ENCODE measurements at regions of chr5 and their contacts with region 1.

Region 1: GRCh38 chr5:15510831-15511230 is 10.9 kb downstream of the FBXL7 start:
- DNase-seq: peak; percentile 16
- ATAC-seq: peak; percentile 40; the same call in 1 of the 2 replicates
- H3K4me3 ChIP-seq: no peak overlapping the region
- H3K27ac ChIP-seq: no peak overlapping the region
- H3K4me1 ChIP-seq: peaks cover 10% of the 10 kb centered on the region
- H3K27me3 ChIP-seq: no peaks in the 10 kb centered on the region
- CTCF ChIP-seq: no peak
- POLR2A ChIP-seq: no peak
- RAD21 ChIP-seq: no peak

Region 2: DNA sequence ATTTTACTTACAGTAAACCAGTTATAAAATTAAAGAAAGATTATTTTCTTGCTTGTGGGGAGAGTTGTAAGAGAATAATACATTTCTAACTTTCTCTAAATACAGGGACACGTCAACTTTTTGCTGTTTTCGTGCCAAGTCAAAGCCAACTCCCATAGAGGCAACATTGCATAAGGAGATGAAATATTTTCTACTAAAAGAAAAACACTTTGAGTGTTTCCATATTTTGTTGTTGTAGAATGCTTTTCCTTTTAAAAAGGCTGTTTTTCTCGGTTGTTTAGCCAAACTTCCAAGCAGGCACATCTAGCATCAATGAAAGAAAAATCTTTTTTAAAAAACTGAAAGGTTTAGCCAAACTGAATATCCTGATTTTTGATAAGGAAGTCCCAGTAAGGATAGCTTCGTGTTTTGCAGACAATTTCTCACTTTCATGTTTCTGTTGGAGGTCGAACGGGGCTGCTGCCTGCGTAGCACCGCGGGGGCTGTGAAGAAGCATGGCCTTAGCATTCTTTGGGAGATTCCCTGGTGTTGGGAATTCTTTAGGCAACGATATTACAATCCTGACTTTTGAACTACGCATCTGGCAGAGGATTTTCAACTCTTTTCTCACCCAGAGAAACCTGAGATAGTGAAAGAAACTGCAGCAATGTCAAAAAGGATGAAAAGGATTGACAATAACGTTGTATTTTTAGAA is 119.0 kb before region 1 on chr5:
- CTCF ChIA-PET with region 1: no interaction called
- POLR2A ChIA-PET with region 1: no interaction called
- dilution Hi-C with region 1: no loop called
- in situ Hi-C with region 1: no loop called
- intact Hi-C with region 1: no loop called
- DNase-seq: no peak
- ATAC-seq: no peak
- H3K4me3 ChIP-seq: no peak overlapping the region
- H3K27ac ChIP-seq: no peak overlapping the region
- H3K4me1 ChIP-seq: peaks cover 2% of the 10 kb centered on the region; the same call in 1 of the 2 replicates
- H3K27me3 ChIP-seq: peaks cover 5% of the 10 kb centered on the region
- CTCF ChIP-seq: no peak
- POLR2A ChIP-seq: no peak
- RAD21 ChIP-seq: no peak

Region 3: DNA sequence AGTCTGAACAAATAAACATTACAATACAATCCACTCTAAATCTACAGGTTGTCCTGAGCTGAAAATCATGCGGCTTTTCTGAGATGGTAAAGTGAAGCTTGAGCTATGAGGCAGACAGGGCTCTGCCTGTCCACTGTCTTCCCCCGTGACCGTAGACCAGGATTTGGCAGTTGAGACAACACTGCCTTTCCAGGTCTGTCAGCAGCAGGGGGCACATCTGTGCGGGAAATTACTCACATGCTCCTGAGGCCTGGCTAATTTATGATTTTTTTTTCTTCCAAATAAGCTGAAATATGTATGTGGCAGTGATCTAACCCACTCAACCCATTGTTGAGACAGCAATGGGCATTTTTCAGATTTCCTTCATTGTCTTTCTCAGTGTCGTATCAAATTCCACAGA is 297.0 kb after region 1 on chr5:
- CTCF ChIA-PET with region 1: no interaction called
- POLR2A ChIA-PET with region 1: no interaction called
- dilution Hi-C with region 1: no loop called
- in situ Hi-C with region 1: no loop called
- intact Hi-C with region 1: loop called (anchors 5 kb)
- DNase-seq: peak; percentile 28
- ATAC-seq: no peak
- H3K4me3 ChIP-seq: no peak overlapping the region
- H3K27ac ChIP-seq: no peak overlapping the region
- H3K4me1 ChIP-seq: peaks cover 3% of the 10 kb centered on the region; the same call in 1 of the 2 replicates
- H3K27me3 ChIP-seq: no peaks in the 10 kb centered on the region
- CTCF ChIP-seq: peak; percentile 16; the same call in 1 of the 2 replicates
- POLR2A ChIP-seq: no peak
- RAD21 ChIP-seq: peak; percentile 13; the same call in 1 of the 2 replicates

Region 4: DNA sequence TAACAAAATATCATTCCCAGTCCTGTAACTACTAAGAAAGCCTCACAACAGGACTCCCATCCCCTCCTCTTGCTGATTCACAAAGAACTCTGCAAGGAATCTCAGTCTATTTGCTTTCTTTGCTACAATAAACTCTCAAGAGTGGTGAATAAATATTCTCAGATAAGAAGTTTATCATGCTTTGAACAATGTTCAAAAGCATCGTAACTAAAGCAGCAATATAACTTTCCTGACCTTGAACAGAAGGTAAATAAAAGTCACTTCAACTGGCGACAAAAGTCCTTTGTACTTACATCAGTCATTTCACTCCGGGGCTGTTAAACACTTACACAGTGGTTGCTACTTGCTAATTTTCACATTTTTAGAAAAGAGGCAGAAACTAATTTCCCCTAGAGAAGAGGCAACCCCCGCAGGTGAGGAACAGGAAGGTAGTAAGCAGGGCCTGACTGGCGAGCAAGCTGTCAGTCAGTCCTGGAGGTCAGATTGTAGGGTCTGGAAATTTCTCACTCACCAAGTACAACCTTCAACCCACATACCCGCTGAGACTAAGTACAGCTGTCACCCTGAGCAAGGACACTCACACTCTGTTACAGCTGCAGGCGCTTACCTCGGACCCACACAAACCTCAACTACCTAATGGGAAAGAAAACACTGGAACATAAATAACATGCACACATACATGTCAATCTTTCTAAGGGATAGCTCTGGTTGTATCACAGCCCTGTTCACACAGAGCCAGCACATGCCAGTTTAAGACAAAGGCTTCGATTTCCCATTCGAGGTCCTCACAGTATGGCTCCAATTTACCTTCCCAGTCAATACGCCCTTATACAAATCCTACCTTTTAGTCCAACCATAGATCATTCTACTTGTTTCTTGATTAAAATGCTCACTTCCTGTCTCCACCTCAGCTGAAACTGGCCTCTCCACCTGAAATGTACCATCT is 1210.6 kb after region 1 on chr5:
- CTCF ChIA-PET with region 1: no interaction called
- POLR2A ChIA-PET with region 1: no interaction called
- dilution Hi-C with region 1: no loop called
- in situ Hi-C with region 1: no loop called
- intact Hi-C with region 1: no loop called
- DNase-seq: no peak
- ATAC-seq: peak; percentile 48
- H3K4me3 ChIP-seq: no peak overlapping the region
- H3K27ac ChIP-seq: no peak overlapping the region
- H3K4me1 ChIP-seq: peaks cover 3% of the 10 kb centered on the region; the same call in 1 of the 2 replicates
- H3K27me3 ChIP-seq: no peaks in the 10 kb centered on the region
- CTCF ChIP-seq: no peak
- POLR2A ChIP-seq: no peak
- RAD21 ChIP-seq: no peak

Measured in IMR-90 (cell line).